Left lung (tissue), 14 donors: ENCODE measurements at regions of chr15 and their contacts with region 1.

Region 1: GRCh38 chr15:38683382-38684242 is 119.0 kb upstream of the RASGRP1 start:
- DNase-seq: peak in 2 of 4 donors; percentile 24 to 57
- ATAC-seq: peak; percentile 98
- H3K4me3 ChIP-seq: no peak overlapping the region
- H3K27ac ChIP-seq: no peak overlapping the region
- H3K4me1 ChIP-seq: no peaks in the 10 kb centered on the region
- H3K27me3 ChIP-seq: no peaks in the 10 kb centered on the region
- CTCF ChIP-seq: peak; percentile 65 to 73

Region 2: DNA sequence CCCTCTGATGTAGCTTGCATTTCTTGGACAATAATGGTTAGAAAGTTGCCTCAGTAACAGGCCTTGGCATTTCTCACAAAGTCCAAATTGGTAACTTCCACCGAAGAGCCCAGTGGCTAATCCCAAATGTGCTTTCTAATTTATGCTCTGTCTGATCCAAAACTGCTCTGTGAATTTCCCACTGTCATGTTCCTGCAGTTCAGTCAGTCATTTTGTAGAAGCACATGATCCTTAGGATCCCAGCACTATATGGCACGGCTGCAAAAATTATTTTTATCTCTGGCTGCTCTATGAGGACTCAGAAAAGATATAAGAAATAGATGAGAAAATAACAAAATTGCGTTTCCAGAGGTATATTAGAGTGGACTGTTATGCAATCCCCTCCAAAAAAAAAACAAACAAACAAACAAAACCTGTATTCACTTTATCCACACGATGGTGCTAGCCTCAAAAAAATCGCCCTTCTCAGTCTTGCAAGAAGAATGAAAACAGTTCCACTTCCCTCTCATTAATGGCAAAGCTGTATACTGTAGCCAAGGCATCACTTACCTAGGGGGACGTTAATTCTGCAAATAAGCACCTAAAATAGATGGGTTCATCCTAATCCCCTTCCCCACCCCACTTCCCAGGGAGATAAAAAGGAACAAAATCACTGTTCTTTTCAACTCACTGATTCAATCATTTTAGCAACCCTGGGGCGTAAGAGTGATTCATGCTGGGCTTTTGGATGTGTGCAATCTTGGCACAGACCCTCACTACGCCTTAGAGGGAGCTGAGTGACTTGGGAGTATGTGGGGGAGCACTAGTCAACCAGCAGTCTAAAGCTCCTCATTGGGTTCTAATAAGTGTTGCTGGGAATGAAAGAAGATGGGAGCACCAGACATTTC is 687.9 kb before region 1 on chr15:
- intact Hi-C with region 1: loop called in 1 of 2 experiments (anchors 10 kb)
- DNase-seq: peak in 2 of 4 donors; percentile 58 to 81
- ATAC-seq: peak; percentile 83
- H3K4me3 ChIP-seq: no peak overlapping the region
- H3K27ac ChIP-seq: no peak overlapping the region
- H3K4me1 ChIP-seq: peaks cover 0 to 8% of the 10 kb centered on the region in 2 donors
- H3K27me3 ChIP-seq: no peaks in the 10 kb centered on the region
- CTCF ChIP-seq: peak; percentile 23 to 53

Region 3: GRCh38 chr15:38440353-38441129 is 243.1 kb before region 1 on chr15:
- intact Hi-C with region 1: loop called in 1 of 2 experiments (anchors 10 kb)
- DNase-seq: peak in 2 of 4 donors; percentile 48 to 68
- ATAC-seq: peak; percentile 98
- H3K4me3 ChIP-seq: no peak overlapping the region
- H3K27ac ChIP-seq: no peak overlapping the region
- H3K4me1 ChIP-seq: peaks cover 0 to 13% of the 10 kb centered on the region in 2 donors
- H3K27me3 ChIP-seq: peaks cover 0 to 9% of the 10 kb centered on the region in 2 donors
- CTCF ChIP-seq: peak; percentile 80 to 96

Region 4: GRCh38 chr15:38563723-38564519 is 119.7 kb before region 1 on chr15:
- intact Hi-C with region 1: loop called in 1 of 2 experiments (anchors 10 kb)
- DNase-seq: peak; percentile 53 to 95 (median 68)
- ATAC-seq: peak; percentile 96
- H3K4me3 ChIP-seq: peak overlapping the region; percentile 53 to 63
- H3K27ac ChIP-seq: peak overlapping the region; percentile 47 to 70
- H3K4me1 ChIP-seq: peaks cover 0 to 21% of the 10 kb centered on the region in 2 donors
- H3K27me3 ChIP-seq: peaks cover 7 to 34% of the 10 kb centered on the region in 2 donors
- CTCF ChIP-seq: peak; percentile 73 to 92